CD4-positive, alpha-beta memory T cell (primary cell): ENCODE measurements at regions of chr11 and their contacts with region 1.

Region 1: GRCh38 chr11:207208-207862 is at the starts of genes BET1L and RIC8A:
- DNase-seq: peak; percentile 95 to 99 (median 98)
- H3K4me3 ChIP-seq: peak within 1 kb of the TSS; percentile 95 to 100
- H3K4me3 Mint-ChIP-seq: peak within 1 kb of the TSS; percentile 94 to 100 (median 99)
- H3K27ac ChIP-seq: peak within 1 kb of the TSS; percentile 98
- H3K27ac Mint-ChIP-seq: peak within 1 kb of the TSS; percentile 99 to 100 (median 99)
- H3K4me1 ChIP-seq: peaks cover 55% of the 10 kb centered on the region
- H3K4me1 Mint-ChIP-seq: peaks cover 22 to 73% (median 50%) of the 10 kb centered on the region in 4 donors
- H3K27me3 ChIP-seq: no peaks in the 10 kb centered on the region
- H3K27me3 Mint-ChIP-seq: no peaks in the 10 kb centered on the region
- total RNA-seq, gene BET1L: 122 to 129 TPM
- total RNA-seq, gene RIC8A: 96.7 to 111 TPM

Region 2: DNA sequence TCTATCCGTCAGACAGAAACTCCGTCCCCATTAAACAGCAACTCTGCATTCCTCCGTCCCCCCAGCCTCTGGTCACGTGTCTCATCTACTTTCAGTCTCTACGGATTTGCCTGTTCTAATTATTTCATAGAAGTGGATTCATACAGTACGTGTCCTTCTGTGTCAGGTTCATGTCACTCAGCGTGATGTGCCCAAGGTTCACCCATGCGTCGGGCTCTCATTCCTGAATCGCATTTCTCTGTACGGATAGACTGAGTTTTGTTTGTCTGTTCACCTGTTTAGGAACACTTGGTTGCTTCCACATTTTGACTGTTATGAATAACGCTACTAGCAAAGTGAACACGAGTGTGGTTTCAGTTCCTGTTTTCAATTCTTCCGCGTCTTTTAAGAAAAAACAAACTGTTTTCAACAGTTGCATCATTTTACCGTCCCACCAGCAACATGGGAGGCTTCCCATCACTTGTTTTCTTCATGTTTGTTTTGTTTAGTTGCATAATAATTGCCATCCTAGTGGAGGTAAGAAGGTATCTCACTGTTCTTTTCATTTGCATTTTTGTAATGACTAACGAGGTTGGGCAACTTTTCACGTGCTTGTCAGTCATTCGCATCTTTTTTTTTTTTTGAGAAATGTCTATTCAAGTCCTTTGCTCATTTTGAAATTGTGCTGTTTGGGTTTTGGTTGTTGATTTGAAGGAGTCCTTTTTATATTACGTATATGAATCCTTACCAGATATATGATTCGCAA is 62.0 kb after region 1 on chr11:
- CTCF ChIA-PET with region 1: no interaction called
- POLR2A ChIA-PET with region 1: interaction called, 72 read pairs
- intact Hi-C with region 1: loop called (anchors 1 kb)
- DNase-seq: peak; percentile 82 to 91 (median 89)
- H3K4me3 ChIP-seq: peak overlapping the region; percentile 6 to 62
- H3K4me3 Mint-ChIP-seq: peak overlapping the region; percentile 81 to 95 (median 87)
- H3K27ac ChIP-seq: peak overlapping the region; percentile 72
- H3K27ac Mint-ChIP-seq: peak overlapping the region; percentile 91 to 99 (median 96)
- H3K4me1 ChIP-seq: peaks cover 25% of the 10 kb centered on the region
- H3K4me1 Mint-ChIP-seq: peaks cover 20 to 34% (median 28%) of the 10 kb centered on the region in 4 donors
- H3K27me3 ChIP-seq: no peaks in the 10 kb centered on the region
- H3K27me3 Mint-ChIP-seq: no peaks in the 10 kb centered on the region

Region 3: DNA sequence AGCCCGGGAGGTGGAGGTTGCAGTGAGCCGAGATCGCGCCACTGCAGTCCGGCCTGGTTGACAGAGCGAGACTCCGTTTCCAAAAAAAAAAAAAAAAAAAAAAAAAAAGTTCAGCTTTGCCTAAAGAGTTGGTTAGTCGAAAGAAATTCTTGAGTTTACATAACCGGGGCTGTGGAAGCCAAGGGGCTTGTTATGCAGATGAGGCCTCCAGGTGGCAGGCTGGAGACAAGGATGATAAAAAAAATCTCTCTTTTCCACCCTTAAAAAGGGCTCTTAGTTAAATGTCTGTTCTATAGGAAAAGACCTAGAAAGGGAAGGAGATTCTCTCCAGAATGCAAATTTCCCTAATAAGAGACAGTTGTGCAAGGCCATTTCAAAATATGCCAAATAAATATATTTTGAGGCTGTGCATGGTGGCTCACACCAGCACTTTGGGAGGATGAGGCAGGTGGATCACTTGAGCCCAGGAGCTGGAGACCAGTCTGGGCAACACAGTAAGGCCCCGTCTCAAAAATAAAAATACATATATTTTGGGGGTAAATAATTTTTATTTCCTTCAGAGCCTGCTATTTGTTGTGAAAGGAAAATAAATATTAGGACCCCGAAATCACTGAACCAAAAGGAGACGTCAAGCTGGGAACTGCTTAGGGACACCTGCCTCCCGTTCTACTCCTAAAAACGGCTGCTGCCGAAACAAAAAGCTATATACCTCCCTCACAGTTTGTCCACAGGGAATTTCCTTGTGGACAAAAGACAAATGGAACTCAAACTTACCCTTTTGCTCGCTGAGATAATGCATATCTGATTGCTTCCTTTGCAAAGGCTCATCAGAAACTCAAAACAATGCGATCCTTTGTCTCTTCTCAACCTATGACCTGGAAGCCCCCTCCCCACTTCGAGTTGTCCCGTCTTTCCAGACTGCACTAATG is 97.8 kb after region 1 on chr11:
- CTCF ChIA-PET with region 1: interaction called, 5 read pairs
- POLR2A ChIA-PET with region 1: interaction called, 15 read pairs
- intact Hi-C with region 1: no loop called
- DNase-seq: peak; percentile 64 to 75 (median 67)
- H3K4me3 ChIP-seq: no peak overlapping the region
- H3K4me3 Mint-ChIP-seq: peak overlapping the region in 5 of 8 donors; percentile 36 to 76 (median 52)
- H3K27ac ChIP-seq: peak overlapping the region; percentile 6
- H3K27ac Mint-ChIP-seq: peak overlapping the region; percentile 1 to 89 (median 78)
- H3K4me1 ChIP-seq: peaks cover 42% of the 10 kb centered on the region
- H3K4me1 Mint-ChIP-seq: peaks cover 20 to 58% (median 34%) of the 10 kb centered on the region in 4 donors
- H3K27me3 ChIP-seq: no peaks in the 10 kb centered on the region
- H3K27me3 Mint-ChIP-seq: peaks cover 0 to 3% of the 10 kb centered on the region in 2 donors

Region 4: GRCh38 chr11:363948-364761 is 156.8 kb after region 1 on chr11:
- CTCF ChIA-PET with region 1: interaction called, 4 read pairs
- POLR2A ChIA-PET with region 1: interaction called, 10 read pairs
- intact Hi-C with region 1: no loop called
- DNase-seq: peak; percentile 61 to 76 (median 72)
- H3K4me3 ChIP-seq: no peak overlapping the region
- H3K4me3 Mint-ChIP-seq: peak overlapping the region in 2 of 8 donors; percentile 12 to 51
- H3K27ac ChIP-seq: no peak overlapping the region
- H3K27ac Mint-ChIP-seq: peak overlapping the region in 2 of 7 donors; percentile 7 to 63
- H3K4me1 ChIP-seq: peaks cover 17% of the 10 kb centered on the region
- H3K4me1 Mint-ChIP-seq: peaks cover 7 to 22% (median 19%) of the 10 kb centered on the region in 4 donors
- H3K27me3 ChIP-seq: peaks cover 22% of the 10 kb centered on the region
- H3K27me3 Mint-ChIP-seq: peaks cover 18 to 20% of the 10 kb centered on the region in 2 donors

Region 5: GRCh38 chr11:379205-380094 is 172.1 kb after region 1 on chr11:
- CTCF ChIA-PET with region 1: no interaction called
- POLR2A ChIA-PET with region 1: no interaction called
- intact Hi-C with region 1: no loop called
- DNase-seq: peak in 1 of 5 donors; percentile 9
- H3K4me3 ChIP-seq: no peak overlapping the region
- H3K4me3 Mint-ChIP-seq: no peak overlapping the region
- H3K27ac ChIP-seq: no peak overlapping the region
- H3K27ac Mint-ChIP-seq: no peak overlapping the region
- H3K4me1 ChIP-seq: no peaks in the 10 kb centered on the region
- H3K4me1 Mint-ChIP-seq: peaks cover 0 to 4% (median 3%) of the 10 kb centered on the region in 4 donors
- H3K27me3 ChIP-seq: no peaks in the 10 kb centered on the region
- H3K27me3 Mint-ChIP-seq: peaks cover 0 to 5% of the 10 kb centered on the region in 2 donors

Region 6: GRCh38 chr11:396948-397548 is 189.7 kb after region 1 on chr11:
- CTCF ChIA-PET with region 1: no interaction called
- POLR2A ChIA-PET with region 1: no interaction called
- intact Hi-C with region 1: no loop called
- DNase-seq: peak; percentile 41 to 57 (median 46)
- H3K4me3 ChIP-seq: peak overlapping the region in 1 of 2 donors; percentile 35
- H3K4me3 Mint-ChIP-seq: peak overlapping the region in 5 of 8 donors; percentile 13 to 54 (median 21)
- H3K27ac ChIP-seq: no peak overlapping the region
- H3K27ac Mint-ChIP-seq: no peak overlapping the region
- H3K4me1 ChIP-seq: peaks cover 4% of the 10 kb centered on the region
- H3K4me1 Mint-ChIP-seq: peaks cover 0 to 10% (median 0%) of the 10 kb centered on the region in 4 donors
- H3K27me3 ChIP-seq: no peaks in the 10 kb centered on the region
- H3K27me3 Mint-ChIP-seq: no peaks in the 10 kb centered on the region

Region 7: GRCh38 chr11:506238-506994 is 299.1 kb after region 1 on chr11:
- CTCF ChIA-PET with region 1: no interaction called
- POLR2A ChIA-PET with region 1: interaction called, 25 read pairs
- intact Hi-C with region 1: loop called (anchors 1 kb)
- DNase-seq: peak; percentile 94 to 98 (median 97)
- H3K4me3 ChIP-seq: peak overlapping the region; percentile 91 to 99
- H3K4me3 Mint-ChIP-seq: peak overlapping the region; percentile 95 to 100 (median 98)
- H3K27ac ChIP-seq: peak overlapping the region; percentile 100
- H3K27ac Mint-ChIP-seq: peak overlapping the region; percentile 100
- H3K4me1 ChIP-seq: peaks cover 35% of the 10 kb centered on the region
- H3K4me1 Mint-ChIP-seq: peaks cover 6 to 42% (median 25%) of the 10 kb centered on the region in 4 donors
- H3K27me3 ChIP-seq: no peaks in the 10 kb centered on the region
- H3K27me3 Mint-ChIP-seq: no peaks in the 10 kb centered on the region